ENCODE measurements at regions of chr12 and their contacts with region 1.

Region 1: GRCh38 chr12:18935371-18935965 is 194.1 kb upstream of the PLEKHA5 start:
- DNase-seq: no peak
- ATAC-seq: no peak
- H3K4me3 ChIP-seq: no peak overlapping the region
- H3K27ac ChIP-seq: no peak overlapping the region
- H3K4me1 ChIP-seq: no peaks in the 10 kb centered on the region
- H3K27me3 ChIP-seq: no peaks in the 10 kb centered on the region
- CTCF ChIP-seq: no peak

Region 2: DNA sequence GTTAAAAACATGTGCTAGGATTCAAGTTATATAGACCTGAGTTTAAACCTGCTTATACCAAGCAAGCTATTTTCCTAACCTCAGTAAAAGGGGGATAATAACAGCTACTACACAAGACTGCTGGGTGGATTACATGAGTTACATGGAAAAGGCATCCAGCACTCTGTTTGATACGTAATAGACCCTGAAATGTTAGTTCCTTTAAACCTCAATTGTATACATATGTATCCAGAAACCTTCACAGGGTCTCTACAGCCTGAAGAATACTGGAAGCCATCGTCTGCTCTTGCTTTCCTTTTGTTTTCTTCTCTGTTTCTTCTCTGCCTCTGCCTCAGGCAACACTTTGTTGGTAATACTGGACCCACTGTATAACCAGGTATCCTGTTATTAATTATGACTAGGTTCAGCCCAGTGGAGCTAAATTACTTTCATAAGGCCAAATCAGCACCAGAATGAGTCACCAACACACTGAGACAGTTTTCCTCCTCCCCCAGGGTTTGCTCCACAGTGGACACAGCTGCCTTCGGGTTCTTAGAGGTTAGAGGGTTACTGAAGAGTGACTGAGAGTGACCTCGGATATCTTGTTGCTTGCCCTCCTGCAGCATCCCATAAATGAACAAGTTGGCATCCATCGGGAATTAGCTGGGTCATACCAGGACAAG is 70.4 kb before region 1 on chr12:
- CTCF ChIA-PET with region 1: no interaction called
- POLR2A ChIA-PET with region 1: no interaction called
- in situ Hi-C with region 1: no loop called
- intact Hi-C with region 1: no loop called
- DNase-seq: no peak
- ATAC-seq: no peak
- H3K4me3 ChIP-seq: no peak overlapping the region
- H3K27ac ChIP-seq: no peak overlapping the region
- H3K4me1 ChIP-seq: no peaks in the 10 kb centered on the region
- H3K27me3 ChIP-seq: no peaks in the 10 kb centered on the region
- CTCF ChIP-seq: no peak

Region 3: GRCh38 chr12:18888047-18888446 is 47.4 kb before region 1 on chr12:
- CTCF ChIA-PET with region 1: interaction called, 3 read pairs
- POLR2A ChIA-PET with region 1: no interaction called
- in situ Hi-C with region 1: no loop called
- intact Hi-C with region 1: loop called (anchors 2 kb)
- DNase-seq: no peak
- ATAC-seq: no peak
- H3K4me3 ChIP-seq: no peak overlapping the region
- H3K27ac ChIP-seq: no peak overlapping the region
- H3K4me1 ChIP-seq: no peaks in the 10 kb centered on the region
- H3K27me3 ChIP-seq: no peaks in the 10 kb centered on the region
- CTCF ChIP-seq: no peak

Region 4: DNA sequence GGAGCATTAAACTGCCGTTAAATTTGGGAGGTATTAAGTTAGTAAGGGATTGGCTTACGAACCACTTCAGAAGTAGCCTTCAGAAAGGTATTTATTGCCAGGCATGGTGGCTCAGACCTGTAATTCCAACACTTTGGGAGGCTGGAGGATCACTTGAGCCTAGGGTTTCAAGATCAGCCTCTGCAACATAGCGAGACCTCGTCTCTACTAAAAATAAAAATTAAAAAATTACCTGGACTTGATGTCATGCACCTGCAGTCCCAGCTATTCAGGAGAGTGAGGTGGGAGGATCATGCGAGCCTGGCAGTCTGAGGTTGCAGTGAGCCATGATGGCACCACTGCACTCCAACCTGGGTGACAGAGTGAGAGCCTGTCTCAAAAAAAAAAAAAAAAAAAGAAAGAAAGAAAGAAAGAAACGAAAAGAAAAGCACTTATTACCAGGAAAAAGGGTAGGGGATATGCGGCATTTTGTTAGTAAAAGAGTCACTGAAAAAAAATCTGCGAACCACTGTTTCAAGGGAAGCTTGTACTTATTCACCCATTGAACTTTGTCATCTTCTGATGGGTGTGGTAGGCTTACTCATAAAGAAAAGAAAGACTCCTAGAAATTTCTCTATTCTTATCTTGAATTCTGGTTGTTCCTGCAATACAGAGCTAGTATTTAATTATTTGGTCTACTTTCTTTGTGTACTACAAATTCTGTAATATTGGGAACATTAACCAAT is 160.4 kb after region 1 on chr12:
- CTCF ChIA-PET with region 1: no interaction called
- POLR2A ChIA-PET with region 1: no interaction called
- in situ Hi-C with region 1: no loop called
- intact Hi-C with region 1: no loop called
- DNase-seq: no peak
- ATAC-seq: no peak
- H3K4me3 ChIP-seq: no peak overlapping the region
- H3K27ac ChIP-seq: no peak overlapping the region
- H3K4me1 ChIP-seq: no peaks in the 10 kb centered on the region
- H3K27me3 ChIP-seq: no peaks in the 10 kb centered on the region
- CTCF ChIP-seq: no peak